ENCODE measurements at regions of chr14 and their contacts with region 1.

Region 1: GRCh38 chr14:62126879-62127478 is 364.8 kb downstream of the SNAPC1 start:
- DNase-seq: no peak
- H3K4me3 Mint-ChIP-seq: no peak overlapping the region
- H3K27ac Mint-ChIP-seq: no peak overlapping the region
- H3K4me1 Mint-ChIP-seq: no peaks in the 10 kb centered on the region
- H3K27me3 Mint-ChIP-seq: peaks cover 20% of the 10 kb centered on the region

Region 2: GRCh38 chr14:61269321-61270083 is 857.5 kb before region 1 on chr14:
- CTCF ChIA-PET with region 1: interaction called, 7 read pairs
- POLR2A ChIA-PET with region 1: no interaction called
- intact Hi-C with region 1: loop called (anchors 1 kb)
- DNase-seq: peak; percentile 86
- H3K4me3 Mint-ChIP-seq: peak overlapping the region; percentile 60
- H3K27ac Mint-ChIP-seq: no peak overlapping the region
- H3K4me1 Mint-ChIP-seq: no peaks in the 10 kb centered on the region
- H3K27me3 Mint-ChIP-seq: peaks cover 28% of the 10 kb centered on the region

Region 3: DNA sequence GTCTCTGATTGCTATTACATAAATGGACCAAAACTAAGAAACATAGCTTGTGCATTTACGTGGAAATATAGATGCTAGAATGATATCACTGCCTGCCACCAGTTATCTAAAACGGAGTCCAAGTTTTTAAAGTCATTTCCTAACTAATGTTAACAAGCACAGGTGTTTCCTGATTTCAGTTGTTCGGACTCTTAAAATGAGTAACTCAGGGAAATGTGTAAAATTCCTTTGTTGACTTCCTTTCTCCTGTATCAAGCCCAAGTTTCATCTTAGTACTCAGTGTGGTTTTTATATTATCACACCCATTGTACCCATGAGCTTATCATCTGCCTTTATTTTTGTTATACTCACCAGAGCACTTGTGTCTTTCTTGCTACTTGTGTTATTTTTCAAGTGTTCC is 818.8 kb before region 1 on chr14:
- CTCF ChIA-PET with region 1: no interaction called
- POLR2A ChIA-PET with region 1: no interaction called
- intact Hi-C with region 1: no loop called
- DNase-seq: no peak
- H3K4me3 Mint-ChIP-seq: no peak overlapping the region
- H3K27ac Mint-ChIP-seq: no peak overlapping the region
- H3K4me1 Mint-ChIP-seq: peaks cover 7% of the 10 kb centered on the region
- H3K27me3 Mint-ChIP-seq: no peaks in the 10 kb centered on the region

Region 4: GRCh38 chr14:61860294-61860918 is 266.6 kb before region 1 on chr14:
- CTCF ChIA-PET with region 1: interaction called, 16 read pairs
- POLR2A ChIA-PET with region 1: no interaction called
- intact Hi-C with region 1: no loop called
- DNase-seq: peak; percentile 85
- H3K4me3 Mint-ChIP-seq: no peak overlapping the region
- H3K27ac Mint-ChIP-seq: no peak overlapping the region
- H3K4me1 Mint-ChIP-seq: no peaks in the 10 kb centered on the region
- H3K27me3 Mint-ChIP-seq: peaks cover 15% of the 10 kb centered on the region

Region 5: DNA sequence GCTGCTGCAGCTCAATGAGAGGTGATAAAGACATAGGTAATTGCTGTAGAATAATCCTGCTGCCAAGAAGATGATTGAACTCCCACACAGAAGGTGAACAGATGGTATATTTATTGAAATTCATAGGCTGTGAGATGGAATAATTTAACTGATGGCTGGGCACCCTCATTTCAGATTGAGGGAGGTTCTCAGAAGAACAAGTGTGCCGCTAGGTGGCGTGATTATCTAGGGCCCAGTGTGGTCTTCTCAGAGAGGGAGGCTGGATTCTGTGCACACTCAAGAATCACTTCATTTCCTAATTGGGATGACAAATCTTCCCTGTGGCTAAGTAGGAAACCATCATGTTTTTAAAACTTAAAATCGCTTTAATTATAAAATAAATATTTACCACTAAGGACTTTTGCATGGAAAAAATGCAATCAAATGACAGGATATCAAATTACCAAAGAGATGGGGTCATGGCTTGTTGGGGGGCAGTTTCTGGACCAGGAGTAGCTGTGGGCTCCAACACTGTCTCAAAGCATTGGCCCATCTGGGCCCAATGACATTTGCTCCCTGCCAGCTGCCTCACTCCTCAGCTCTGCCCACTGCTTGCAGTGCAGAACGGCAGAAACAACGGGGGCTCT is 232.4 kb before region 1 on chr14:
- CTCF ChIA-PET with region 1: interaction called, 70 read pairs
- POLR2A ChIA-PET with region 1: no interaction called
- intact Hi-C with region 1: loop called (anchors 1 kb)
- DNase-seq: peak; percentile 68
- H3K4me3 Mint-ChIP-seq: no peak overlapping the region
- H3K27ac Mint-ChIP-seq: no peak overlapping the region
- H3K4me1 Mint-ChIP-seq: peaks cover 10% of the 10 kb centered on the region
- H3K27me3 Mint-ChIP-seq: peaks cover 5% of the 10 kb centered on the region

Region 6: DNA sequence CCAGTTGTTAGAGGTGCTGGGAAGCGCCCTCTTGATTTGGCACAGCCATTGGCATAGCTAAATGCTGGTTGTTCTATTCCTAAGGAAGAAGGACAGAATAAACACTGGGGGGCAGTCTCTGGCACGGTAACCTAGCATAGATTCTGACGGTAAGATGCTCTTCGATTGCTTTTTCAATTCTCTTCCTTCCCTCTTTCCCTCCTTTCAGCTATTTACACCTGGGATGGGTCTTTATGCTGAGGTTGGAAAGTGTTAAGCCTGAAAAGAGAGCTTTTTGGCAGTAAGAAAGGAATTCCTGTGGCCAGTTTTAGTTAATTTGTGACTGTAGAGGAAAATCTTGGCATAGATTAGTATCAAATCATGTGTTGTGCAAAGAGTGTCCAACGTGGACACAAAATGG is 201.9 kb before region 1 on chr14:
- CTCF ChIA-PET with region 1: interaction called, 75 read pairs
- POLR2A ChIA-PET with region 1: no interaction called
- intact Hi-C with region 1: loop called (anchors 1 kb)
- DNase-seq: peak; percentile 22
- H3K4me3 Mint-ChIP-seq: no peak overlapping the region
- H3K27ac Mint-ChIP-seq: no peak overlapping the region
- H3K4me1 Mint-ChIP-seq: no peaks in the 10 kb centered on the region
- H3K27me3 Mint-ChIP-seq: peaks cover 17% of the 10 kb centered on the region

Region 7: DNA sequence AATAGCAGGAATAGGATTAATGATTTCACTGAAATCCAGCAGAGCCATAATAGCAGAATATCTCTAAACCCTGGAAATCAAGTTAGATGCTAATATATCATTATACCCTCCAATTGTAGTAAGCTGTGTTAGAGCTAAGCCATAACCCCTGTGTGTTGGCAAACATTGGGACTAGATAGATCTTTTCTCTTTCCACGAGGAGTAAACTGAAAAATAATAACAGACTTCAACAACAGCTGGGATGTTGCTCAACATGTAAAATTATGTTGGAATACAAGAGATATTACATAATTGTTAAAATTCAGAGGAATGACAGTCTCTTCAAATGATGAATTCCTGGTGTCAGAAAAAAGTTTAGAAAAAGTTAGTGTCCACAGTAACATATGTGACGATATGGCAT is 19.1 kb after region 1 on chr14:
- CTCF ChIA-PET with region 1: no interaction called
- POLR2A ChIA-PET with region 1: no interaction called
- intact Hi-C with region 1: no loop called
- DNase-seq: no peak
- H3K4me3 Mint-ChIP-seq: no peak overlapping the region
- H3K27ac Mint-ChIP-seq: no peak overlapping the region
- H3K4me1 Mint-ChIP-seq: no peaks in the 10 kb centered on the region
- H3K27me3 Mint-ChIP-seq: peaks cover 8% of the 10 kb centered on the region

Region 8: DNA sequence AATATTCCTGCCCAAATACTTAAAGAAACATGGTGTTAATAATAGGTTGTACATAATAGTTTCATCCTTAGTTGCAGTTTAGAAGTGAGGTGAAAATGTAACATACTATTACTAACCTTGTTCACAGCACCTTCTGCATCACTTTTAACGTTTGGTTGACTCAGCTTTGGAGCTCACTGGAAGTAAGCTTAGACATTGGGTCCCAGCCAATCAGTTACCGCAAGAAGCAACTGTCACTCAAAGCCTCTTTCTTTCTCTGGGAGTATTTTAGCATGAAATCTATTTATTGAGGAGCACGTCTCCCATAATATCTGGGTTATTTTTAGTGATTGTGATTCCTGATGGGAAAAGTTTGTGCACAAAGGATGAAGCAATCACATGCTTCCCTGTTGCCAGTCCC is 107.9 kb after region 1 on chr14:
- CTCF ChIA-PET with region 1: no interaction called
- POLR2A ChIA-PET with region 1: no interaction called
- intact Hi-C with region 1: no loop called
- DNase-seq: no peak
- H3K4me3 Mint-ChIP-seq: no peak overlapping the region
- H3K27ac Mint-ChIP-seq: no peak overlapping the region
- H3K4me1 Mint-ChIP-seq: no peaks in the 10 kb centered on the region
- H3K27me3 Mint-ChIP-seq: no peaks in the 10 kb centered on the region

Measured in activated CD4-positive, alpha-beta memory T cell treated with anti-CD3 and anti-CD28 coated beads for 36 hours (primary cell).